Caco-2 (cell line): ENCODE measurements at regions of chr21 and their contacts with region 1.

Region 1: DNA sequence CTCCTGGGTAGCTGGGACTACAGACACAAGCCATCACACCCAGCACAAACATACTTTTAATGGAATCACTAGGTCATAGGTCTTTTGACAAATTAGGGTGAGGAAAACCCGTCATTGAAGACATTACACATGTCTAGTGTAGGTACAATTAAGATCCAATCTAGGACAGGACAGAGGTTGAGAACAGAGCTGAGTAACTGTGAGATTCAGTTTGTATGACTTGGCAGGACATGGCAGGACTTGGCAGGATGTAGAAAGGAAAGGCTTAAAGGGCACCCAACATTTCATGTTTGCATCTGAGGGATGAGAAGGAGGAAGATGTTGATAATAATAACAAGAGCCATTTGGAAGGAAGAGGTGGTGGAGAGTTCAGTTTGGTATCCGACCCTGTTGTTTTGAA is 483.8 kb downstream of the PCP4 start:
- DNase-seq: no peak
- H3K4me3 ChIP-seq: no peak overlapping the region
- H3K4me3 Mint-ChIP-seq: no peak overlapping the region
- H3K27ac Mint-ChIP-seq: no peak overlapping the region
- H3K4me1 ChIP-seq: no peaks in the 10 kb centered on the region
- H3K4me1 Mint-ChIP-seq: no peaks in the 10 kb centered on the region
- H3K27me3 ChIP-seq: no peaks in the 10 kb centered on the region
- H3K27me3 Mint-ChIP-seq: peaks cover 12% of the 10 kb centered on the region
- CTCF ChIP-seq: no peak

Region 2: GRCh38 chr21:40367824-40368223 is 16.8 kb after region 1 on chr21:
- CTCF ChIA-PET with region 1: no interaction called
- POLR2A ChIA-PET with region 1: no interaction called
- intact Hi-C with region 1: no loop called
- DNase-seq: no peak
- H3K4me3 ChIP-seq: no peak overlapping the region
- H3K4me3 Mint-ChIP-seq: no peak overlapping the region
- H3K27ac Mint-ChIP-seq: no peak overlapping the region
- H3K4me1 ChIP-seq: no peaks in the 10 kb centered on the region
- H3K4me1 Mint-ChIP-seq: no peaks in the 10 kb centered on the region
- H3K27me3 ChIP-seq: no peaks in the 10 kb centered on the region
- H3K27me3 Mint-ChIP-seq: peaks cover 4% of the 10 kb centered on the region
- CTCF ChIP-seq: no peak

Region 3: DNA sequence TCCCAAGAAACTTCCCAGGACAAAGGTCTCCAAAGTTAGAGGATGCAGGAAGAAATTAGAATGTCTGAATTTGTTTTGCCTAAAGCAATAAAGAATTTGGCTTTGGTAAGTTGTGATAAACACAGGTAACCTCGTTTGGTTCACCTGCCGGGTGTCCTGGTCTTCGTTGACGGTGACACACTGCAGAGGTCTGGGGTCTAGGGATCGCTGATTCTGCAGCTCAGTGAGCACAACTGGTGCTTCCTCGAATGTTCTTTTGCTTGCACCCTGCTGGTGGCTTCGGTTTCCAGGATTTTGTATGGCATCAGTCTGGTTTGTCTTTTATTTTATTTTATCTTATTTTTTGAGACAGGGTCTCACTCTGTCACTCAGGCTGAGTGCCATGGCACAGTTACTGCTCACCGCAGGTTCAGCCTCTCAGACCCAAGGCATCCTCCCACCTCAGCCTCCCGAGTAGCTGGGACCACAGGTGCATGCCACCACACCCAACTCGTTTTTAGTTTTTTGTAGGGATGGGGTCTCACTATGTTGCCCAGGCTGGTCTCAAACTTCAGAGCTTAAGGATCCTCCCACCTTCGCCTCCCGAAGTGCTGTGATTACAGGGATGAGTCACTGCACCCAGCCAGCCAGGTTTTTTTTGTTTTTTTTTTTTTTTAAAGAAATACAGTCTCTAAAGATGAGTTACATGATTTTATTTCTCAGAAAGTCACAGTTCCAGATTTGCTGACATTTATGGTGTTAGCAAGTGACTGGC is 845.8 kb after region 1 on chr21:
- CTCF ChIA-PET with region 1: interaction called, 12 read pairs
- POLR2A ChIA-PET with region 1: no interaction called
- intact Hi-C with region 1: no loop called
- DNase-seq: no peak
- H3K4me3 ChIP-seq: no peak overlapping the region
- H3K4me3 Mint-ChIP-seq: no peak overlapping the region
- H3K27ac Mint-ChIP-seq: no peak overlapping the region
- H3K4me1 ChIP-seq: no peaks in the 10 kb centered on the region
- H3K4me1 Mint-ChIP-seq: no peaks in the 10 kb centered on the region
- H3K27me3 ChIP-seq: no peaks in the 10 kb centered on the region
- H3K27me3 Mint-ChIP-seq: peaks cover 3% of the 10 kb centered on the region
- CTCF ChIP-seq: no peak